Activated CD4-positive, alpha-beta memory T cell treated with anti-CD3 and anti-CD28 coated beads for 36 hours (primary cell): ENCODE measurements at regions of chrX and their contacts with region 1.

Region 1: GRCh38 chrX:23667239-23668177 is at the start of gene PRDX4:
- DNase-seq: peak; percentile 87
- H3K4me3 Mint-ChIP-seq: peak within 1 kb of the TSS; percentile 80
- H3K27ac Mint-ChIP-seq: peak within 1 kb of the TSS; percentile 87
- H3K4me1 Mint-ChIP-seq: peaks cover 23% of the 10 kb centered on the region
- H3K27me3 Mint-ChIP-seq: no peaks in the 10 kb centered on the region
- total RNA-seq, gene PRDX4: 56.0 to 59.8 TPM

Region 2: GRCh38 chrX:22063284-22063683 is 1604.2 kb before region 1 on chrX:
- CTCF ChIA-PET with region 1: no interaction called
- POLR2A ChIA-PET with region 1: no interaction called
- intact Hi-C with region 1: loop called (anchors 10 kb)
- DNase-seq: peak; percentile 47
- H3K4me3 Mint-ChIP-seq: no peak overlapping the region
- H3K27ac Mint-ChIP-seq: peak overlapping the region; percentile 38
- H3K4me1 Mint-ChIP-seq: peaks cover 59% of the 10 kb centered on the region
- H3K27me3 Mint-ChIP-seq: no peaks in the 10 kb centered on the region

Region 3: GRCh38 chrX:23694606-23695005 is 27.1 kb after region 1 on chrX:
- CTCF ChIA-PET with region 1: no interaction called
- POLR2A ChIA-PET with region 1: no interaction called
- intact Hi-C with region 1: no loop called
- DNase-seq: peak; percentile 46
- H3K4me3 Mint-ChIP-seq: no peak overlapping the region
- H3K27ac Mint-ChIP-seq: no peak overlapping the region
- H3K4me1 Mint-ChIP-seq: no peaks in the 10 kb centered on the region
- H3K27me3 Mint-ChIP-seq: no peaks in the 10 kb centered on the region

Region 4: GRCh38 chrX:23901805-23902204 is 234.3 kb after region 1 on chrX:
- CTCF ChIA-PET with region 1: interaction called, 11 read pairs
- POLR2A ChIA-PET with region 1: no interaction called
- intact Hi-C with region 1: loop called (anchors 1 kb)
- DNase-seq: peak; percentile 46
- H3K4me3 Mint-ChIP-seq: no peak overlapping the region
- H3K27ac Mint-ChIP-seq: no peak overlapping the region
- H3K4me1 Mint-ChIP-seq: peaks cover 15% of the 10 kb centered on the region
- H3K27me3 Mint-ChIP-seq: no peaks in the 10 kb centered on the region

Region 5: DNA sequence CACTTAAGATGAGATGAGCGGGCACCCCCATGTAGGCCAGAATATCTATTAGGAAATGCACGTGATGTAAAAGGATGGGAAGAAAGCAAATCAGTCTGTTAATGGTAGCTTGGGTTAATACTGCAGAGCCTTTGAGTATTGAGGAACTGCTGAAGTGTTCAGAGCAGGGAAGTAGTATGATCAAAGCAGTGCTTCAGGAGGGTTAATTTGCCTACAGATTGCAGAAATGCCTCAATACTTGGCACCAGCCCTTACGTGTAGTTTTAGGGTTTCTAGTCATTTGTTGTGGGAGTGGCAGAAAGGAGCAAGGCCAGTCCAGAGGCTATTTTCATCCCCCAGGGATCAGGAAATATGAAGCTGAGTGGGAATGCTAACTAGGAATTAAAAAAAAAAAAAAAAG is 501.7 kb after region 1 on chrX:
- CTCF ChIA-PET with region 1: no interaction called
- POLR2A ChIA-PET with region 1: no interaction called
- intact Hi-C with region 1: loop called (anchors 10 kb)
- DNase-seq: no peak
- H3K4me3 Mint-ChIP-seq: peak overlapping the region; percentile 53
- H3K27ac Mint-ChIP-seq: peak overlapping the region; percentile 92
- H3K4me1 Mint-ChIP-seq: peaks cover 52% of the 10 kb centered on the region
- H3K27me3 Mint-ChIP-seq: no peaks in the 10 kb centered on the region